AG04449 (cell line): ENCODE measurements at regions of chr2 and their contacts with region 1.

Region 1: GRCh38 chr2:63841254-63842022 is at the start of gene UGP2:
- DNase-seq: peak; percentile 72
- H3K4me3 ChIP-seq: peak within 1 kb of the TSS; percentile 83
- CTCF ChIP-seq: peak; percentile 33

Region 2: DNA sequence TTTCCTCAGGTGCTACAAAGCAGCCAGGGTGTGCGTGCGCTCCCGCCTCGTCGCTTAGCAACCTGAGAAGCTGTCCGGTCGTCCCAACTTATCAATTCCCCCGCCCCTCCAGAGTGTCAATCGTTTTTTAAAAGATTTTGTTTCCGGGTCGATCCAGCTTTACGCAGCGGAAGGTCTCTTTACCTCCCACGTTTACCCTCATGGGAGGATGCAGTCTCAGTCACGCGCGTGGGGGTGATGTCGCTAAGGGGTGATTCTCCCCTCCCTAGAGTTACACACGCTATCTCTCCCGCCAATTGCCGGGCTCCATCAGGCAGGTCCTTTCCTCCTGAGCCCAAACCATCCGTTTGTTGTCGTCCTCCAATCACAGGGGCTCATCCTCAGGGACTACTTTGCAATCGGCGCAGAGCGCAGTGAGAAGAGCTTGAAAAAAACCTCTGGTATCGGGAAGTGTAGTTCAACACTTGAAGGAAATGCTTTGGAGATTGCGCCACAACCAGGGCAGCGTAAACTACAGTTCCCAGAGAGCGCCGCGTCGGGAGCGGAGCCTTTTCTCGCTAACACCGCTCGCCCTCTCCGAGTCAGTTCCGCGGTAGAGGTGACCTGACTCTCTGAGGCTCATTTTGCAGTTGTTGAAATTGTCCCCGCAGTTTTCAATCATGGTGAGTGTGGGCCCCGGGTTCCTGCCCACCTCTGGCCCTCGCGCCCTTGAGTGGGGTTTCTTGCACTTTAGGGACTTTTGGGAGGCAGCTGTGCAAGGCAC is 252.9 kb before region 1 on chr2 and contains the starts of genes MDH1 and WDPCP:
- CTCF ChIA-PET with region 1: no interaction called
- POLR2A ChIA-PET with region 1: interaction called, 12 read pairs
- DNase-seq: peak; percentile 100
- H3K4me3 ChIP-seq: peak within 1 kb of the TSS; percentile 92
- CTCF ChIP-seq: no peak

Region 3: GRCh38 chr2:63827749-63828148 is 13.7 kb before region 1 on chr2:
- CTCF ChIA-PET with region 1: interaction called, 4 read pairs
- POLR2A ChIA-PET with region 1: interaction called, 34 read pairs
- DNase-seq: no peak
- H3K4me3 ChIP-seq: no peak overlapping the region
- CTCF ChIP-seq: no peak

Region 4: DNA sequence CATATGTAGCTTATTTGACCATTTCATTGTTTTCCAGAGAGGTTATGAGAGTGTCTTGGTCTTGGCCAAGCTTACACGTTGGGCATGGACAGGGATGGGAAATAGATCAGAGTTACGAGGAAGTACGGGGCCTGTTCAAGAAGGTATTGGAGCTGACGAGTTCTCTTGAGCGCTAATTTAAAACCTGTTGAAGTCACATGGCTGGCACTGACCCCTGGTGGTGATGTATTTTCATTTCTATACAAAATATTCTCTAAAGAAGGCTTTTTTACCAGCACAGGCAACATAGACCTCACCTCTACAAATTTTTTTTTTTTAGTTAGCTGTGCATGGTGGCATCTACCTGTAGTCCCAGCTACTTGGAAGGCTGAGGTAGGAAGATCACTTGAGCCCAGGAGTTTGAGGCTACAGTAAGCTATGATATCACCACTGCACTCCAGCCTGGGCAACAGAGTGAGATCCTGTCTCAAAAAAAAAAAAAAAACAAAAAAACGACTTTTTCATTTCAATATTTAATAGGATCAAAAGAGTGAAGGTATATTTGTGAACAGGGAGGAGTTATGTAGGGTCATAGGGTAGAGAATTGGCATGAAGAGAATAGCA is 19.9 kb after region 1 on chr2:
- CTCF ChIA-PET with region 1: interaction called, 18 read pairs
- POLR2A ChIA-PET with region 1: interaction called, 5 read pairs
- DNase-seq: no peak
- H3K4me3 ChIP-seq: no peak overlapping the region
- CTCF ChIP-seq: peak; percentile 21

Region 5: DNA sequence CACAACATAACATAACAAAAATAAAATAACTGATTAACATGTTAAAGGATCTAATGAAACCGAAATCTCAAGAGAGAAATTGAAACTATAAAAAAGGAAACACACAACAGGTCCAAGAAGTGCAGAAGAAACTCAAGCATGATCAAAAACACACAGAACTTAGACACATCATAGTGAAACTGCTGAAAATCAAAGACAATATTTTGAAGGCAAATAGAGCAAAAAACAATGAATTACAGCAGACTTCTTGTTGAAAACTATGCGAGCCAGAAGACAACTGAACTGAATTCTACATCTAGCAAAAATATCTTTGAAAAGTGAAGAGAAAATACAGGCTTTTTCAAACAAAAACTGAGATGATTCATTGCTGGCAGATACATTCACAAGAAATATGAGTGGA is 61.6 kb after region 1 on chr2:
- CTCF ChIA-PET with region 1: no interaction called
- POLR2A ChIA-PET with region 1: no interaction called
- DNase-seq: no peak
- H3K4me3 ChIP-seq: no peak overlapping the region
- CTCF ChIP-seq: no peak